ENCODE measurements at regions of chr21 and their contacts with region 1.

Region 1: GRCh38 chr21:45478115-45478801 is 64.0 kb downstream of the SLC19A1 start:
- DNase-seq: no peak
- ATAC-seq: peak; percentile 90
- H3K4me3 ChIP-seq: peak overlapping the region; percentile 58; the same call in 1 of the 2 replicates
- H3K27ac ChIP-seq: no peak overlapping the region
- H3K4me1 ChIP-seq: peaks cover 6% of the 10 kb centered on the region; the same call in 1 of the 2 replicates
- H3K27me3 ChIP-seq: no peaks in the 10 kb centered on the region
- CTCF ChIP-seq: peak; percentile 76 to 82 (median 79); a peak in 5 of 6 replicates
- EP300 ChIP-seq: no peak
- POLR2A ChIP-seq: no peak
- RAD21 ChIP-seq: peak; percentile 52

Region 2: DNA sequence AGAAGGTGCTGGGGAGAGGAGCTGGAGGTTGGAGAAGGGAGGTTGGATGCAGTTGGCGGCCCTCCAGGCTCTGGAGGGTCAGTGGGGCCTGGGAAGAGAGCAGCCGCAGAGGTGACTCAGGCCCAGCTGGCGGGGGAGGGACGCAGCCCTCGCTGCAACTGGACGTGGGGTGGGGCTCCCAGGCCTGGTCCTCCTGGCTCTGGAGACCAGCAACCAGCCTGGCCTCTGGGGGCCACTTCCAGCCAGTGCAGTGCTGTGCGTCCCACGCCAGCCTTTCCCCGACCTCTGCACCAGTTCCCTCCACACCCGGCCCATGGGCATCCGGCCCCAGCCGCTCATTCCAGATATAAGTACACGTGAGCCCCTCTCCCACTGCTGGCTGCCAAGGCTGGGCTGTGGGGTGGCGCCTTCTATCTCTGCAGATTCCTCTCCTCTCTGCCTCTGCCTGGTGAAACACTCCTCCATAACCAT is 111.3 kb before region 1 on chr21:
- CTCF ChIA-PET with region 1: no interaction called
- POLR2A ChIA-PET with region 1: no interaction called
- RAD21 ChIA-PET with region 1: no interaction called
- SMC1A ChIA-PET with region 1: no interaction called
- in situ Hi-C with region 1: no loop called
- intact Hi-C with region 1: no loop called
- DNase-seq: no peak
- ATAC-seq: no peak
- H3K4me3 ChIP-seq: no peak overlapping the region
- H3K27ac ChIP-seq: no peak overlapping the region
- H3K4me1 ChIP-seq: no peaks in the 10 kb centered on the region
- H3K27me3 ChIP-seq: no peaks in the 10 kb centered on the region; a peak in 1 of 4 replicates
- CTCF ChIP-seq: no peak
- EP300 ChIP-seq: no peak
- POLR2A ChIP-seq: no peak
- RAD21 ChIP-seq: no peak

Region 3: DNA sequence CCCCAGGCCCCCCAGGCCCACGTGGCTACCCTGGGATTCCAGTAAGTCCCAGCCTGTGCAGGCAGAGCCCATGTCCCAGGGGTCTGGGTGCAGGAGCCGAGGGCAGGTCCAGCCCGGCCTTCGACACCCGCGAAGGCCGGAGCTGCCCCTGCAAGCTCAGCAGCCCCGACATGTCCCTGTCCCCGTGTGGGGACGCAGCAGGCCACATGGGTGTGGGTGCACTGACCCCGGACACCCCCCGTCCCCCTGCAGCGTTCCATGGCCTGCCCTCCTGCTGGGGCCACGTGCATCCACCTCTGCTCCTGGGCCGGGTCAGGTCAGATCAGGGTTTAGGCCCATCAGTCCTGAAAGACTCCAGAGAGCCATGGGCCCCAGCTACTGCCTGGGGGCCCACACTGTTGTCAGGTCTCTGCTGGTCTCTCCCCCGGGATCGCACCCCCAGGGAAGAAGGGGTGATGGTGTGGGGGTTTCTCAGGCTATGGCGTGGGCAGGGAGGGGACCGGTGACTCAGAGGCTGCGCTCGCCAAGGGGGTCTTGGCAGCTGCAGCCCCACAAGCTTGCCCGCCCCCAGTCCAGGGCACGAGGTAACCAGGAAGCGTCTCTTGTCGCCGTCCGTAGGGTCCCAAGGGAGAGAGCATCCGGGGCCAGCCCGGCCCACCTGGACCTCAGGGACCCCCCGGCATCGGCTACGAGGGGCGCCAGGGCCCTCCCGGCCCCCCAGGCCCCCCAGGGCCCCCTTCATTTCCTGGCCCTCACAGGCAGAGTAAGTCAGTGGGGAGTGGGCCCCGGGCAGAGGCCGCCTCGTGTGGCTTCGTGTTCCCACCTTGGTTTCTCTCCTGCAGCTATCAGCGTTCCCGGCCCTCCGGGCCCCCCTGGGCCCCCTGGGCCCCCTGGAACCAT is 26.5 kb after region 1 on chr21:
- CTCF ChIA-PET with region 1: no interaction called
- POLR2A ChIA-PET with region 1: no interaction called
- RAD21 ChIA-PET with region 1: no interaction called
- SMC1A ChIA-PET with region 1: no interaction called
- in situ Hi-C with region 1: no loop called
- intact Hi-C with region 1: no loop called
- DNase-seq: no peak
- ATAC-seq: peak; percentile 13; the same call in 1 of the 3 replicates
- H3K4me3 ChIP-seq: no peak overlapping the region
- H3K27ac ChIP-seq: no peak overlapping the region
- H3K4me1 ChIP-seq: peaks cover 2% of the 10 kb centered on the region; the same call in 1 of the 2 replicates
- H3K27me3 ChIP-seq: no peaks in the 10 kb centered on the region
- CTCF ChIP-seq: no peak
- EP300 ChIP-seq: no peak
- POLR2A ChIP-seq: no peak
- RAD21 ChIP-seq: no peak

Region 4: GRCh38 chr21:45542242-45542666 is 64.0 kb after region 1 on chr21 and contains the start of gene SLC19A1:
- CTCF ChIA-PET with region 1: no interaction called
- POLR2A ChIA-PET with region 1: no interaction called
- RAD21 ChIA-PET with region 1: no interaction called
- SMC1A ChIA-PET with region 1: no interaction called
- in situ Hi-C with region 1: no loop called
- intact Hi-C with region 1: loop called (anchors 10 kb)
- DNase-seq: no peak
- ATAC-seq: peak; percentile 86
- H3K4me3 ChIP-seq: peak within 1 kb of the TSS; percentile 78
- H3K27ac ChIP-seq: peak within 1 kb of the TSS; percentile 69
- H3K4me1 ChIP-seq: peaks cover 12% of the 10 kb centered on the region
- H3K27me3 ChIP-seq: no peaks in the 10 kb centered on the region
- CTCF ChIP-seq: peak in 2 of 3 experiments; percentile 35 to 39; a peak in 2 of 6 replicates
- EP300 ChIP-seq: no peak
- POLR2A ChIP-seq: peak; percentile 62
- RAD21 ChIP-seq: 0 out of 2 replicates have a peak, but pooled peaks have one; percentile 13
- polyA plus RNA-seq, gene SLC19A1: 0.42 to 1.5 TPM

Region 5: GRCh38 chr21:45820171-45821091 is 342.2 kb after region 1 on chr21:
- CTCF ChIA-PET with region 1: no interaction called
- POLR2A ChIA-PET with region 1: no interaction called
- RAD21 ChIA-PET with region 1: no interaction called
- SMC1A ChIA-PET with region 1: no interaction called
- in situ Hi-C with region 1: loop called (anchors 25 kb)
- intact Hi-C with region 1: loop called (anchors 10 kb)
- DNase-seq: no peak
- ATAC-seq: peak; percentile 88
- H3K4me3 ChIP-seq: no peak overlapping the region
- H3K27ac ChIP-seq: no peak overlapping the region
- H3K4me1 ChIP-seq: peaks cover 4% of the 10 kb centered on the region
- H3K27me3 ChIP-seq: no peaks in the 10 kb centered on the region
- CTCF ChIP-seq: peak; percentile 83 to 94 (median 90); a peak in 5 of 6 replicates
- EP300 ChIP-seq: no peak
- POLR2A ChIP-seq: no peak
- RAD21 ChIP-seq: peak; percentile 94

Region 6: GRCh38 chr21:45874716-45875415 is 396.6 kb after region 1 on chr21:
- CTCF ChIA-PET with region 1: no interaction called
- POLR2A ChIA-PET with region 1: no interaction called
- RAD21 ChIA-PET with region 1: no interaction called
- SMC1A ChIA-PET with region 1: no interaction called
- in situ Hi-C with region 1: no loop called
- intact Hi-C with region 1: no loop called
- DNase-seq: no peak
- ATAC-seq: no peak
- H3K4me3 ChIP-seq: no peak overlapping the region
- H3K27ac ChIP-seq: no peak overlapping the region
- H3K4me1 ChIP-seq: no peaks in the 10 kb centered on the region
- H3K27me3 ChIP-seq: no peaks in the 10 kb centered on the region; a peak in 1 of 4 replicates
- CTCF ChIP-seq: no peak
- EP300 ChIP-seq: no peak
- POLR2A ChIP-seq: no peak
- RAD21 ChIP-seq: no peak

Measured in GM12878 (cell line).